ENCODE measurements at regions of chr3 and their contacts with region 1.

Region 1: DNA sequence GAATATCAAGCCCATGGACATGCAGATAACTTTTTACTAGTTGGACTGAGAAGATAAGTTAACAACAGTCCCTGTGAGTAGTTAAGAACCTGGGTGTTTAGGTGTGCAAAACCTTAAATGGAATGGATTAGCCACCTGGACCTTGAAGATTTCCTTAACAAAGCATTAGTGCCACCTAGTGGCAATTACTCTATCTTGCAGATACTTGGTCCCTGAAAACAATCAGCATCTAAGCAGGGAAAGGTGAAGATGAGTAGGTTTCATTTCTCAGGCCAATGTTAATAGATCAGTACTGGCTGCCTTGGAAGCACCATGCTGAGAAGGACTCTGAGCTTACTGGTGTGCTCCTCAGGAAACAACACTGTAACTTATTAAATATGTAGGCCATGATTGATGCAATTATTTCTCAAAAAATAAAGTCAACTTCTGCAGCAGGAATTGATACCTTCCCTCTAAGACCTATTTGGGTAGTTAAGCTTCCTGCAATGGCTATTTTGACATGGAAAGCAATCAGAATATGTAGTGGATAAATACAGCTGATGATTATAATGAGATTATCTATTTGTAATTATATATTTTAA is 329.4 kb downstream of the TBC1D5 start:
- H3K4me3 ChIP-seq: no peak overlapping the region
- H3K27ac ChIP-seq: no peak overlapping the region
- H3K4me1 ChIP-seq: no peaks in the 10 kb centered on the region
- CTCF ChIP-seq: peak; percentile 68

Region 2: DNA sequence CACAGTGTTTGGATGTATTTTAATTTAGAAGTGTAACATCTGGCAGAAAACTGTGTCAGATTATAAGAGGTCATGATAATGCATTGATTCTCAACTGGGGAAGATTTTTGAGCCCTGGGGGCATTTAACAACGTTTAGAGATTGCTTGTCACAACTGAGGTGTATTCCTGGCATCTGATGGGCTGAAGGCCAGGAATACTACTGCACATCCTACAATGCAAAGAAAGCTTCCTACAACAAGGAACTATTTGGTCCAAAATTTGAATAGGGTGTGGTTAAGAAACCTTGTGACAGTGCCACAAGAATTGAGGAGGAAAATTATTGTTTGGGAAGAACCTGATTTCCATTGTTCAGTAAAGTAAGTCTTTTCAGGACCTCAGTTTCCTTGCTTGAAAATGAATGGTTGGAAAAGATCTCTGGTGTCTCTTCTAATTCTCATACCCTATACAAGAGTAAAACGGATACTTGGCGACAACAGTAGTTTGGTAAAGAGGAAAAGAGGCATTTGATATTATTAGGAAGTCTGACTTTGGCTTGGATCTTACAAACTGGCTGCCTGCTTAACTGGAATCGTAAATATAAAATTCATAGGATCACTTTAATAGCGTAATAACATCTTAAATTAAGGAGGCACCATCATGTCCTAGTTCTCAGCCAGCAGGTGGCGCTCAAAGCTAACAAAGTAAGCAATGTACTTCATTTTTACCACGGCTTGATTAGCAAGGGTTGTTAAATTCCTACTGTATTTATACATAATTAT is 812.1 kb before region 1 on chr3:
- CTCF ChIA-PET with region 1: interaction called, 13 read pairs
- POLR2A ChIA-PET with region 1: no interaction called
- H3K4me3 ChIP-seq: no peak overlapping the region
- H3K27ac ChIP-seq: no peak overlapping the region
- H3K4me1 ChIP-seq: no peaks in the 10 kb centered on the region
- CTCF ChIP-seq: peak; percentile 40; the same call in 1 of the 2 replicates

Region 3: GRCh38 chr3:17258823-17259436 is 154.1 kb before region 1 on chr3:
- CTCF ChIA-PET with region 1: interaction called, 20 read pairs
- POLR2A ChIA-PET with region 1: no interaction called
- H3K4me3 ChIP-seq: no peak overlapping the region
- H3K27ac ChIP-seq: no peak overlapping the region
- H3K4me1 ChIP-seq: no peaks in the 10 kb centered on the region
- CTCF ChIP-seq: no peak

Region 4: DNA sequence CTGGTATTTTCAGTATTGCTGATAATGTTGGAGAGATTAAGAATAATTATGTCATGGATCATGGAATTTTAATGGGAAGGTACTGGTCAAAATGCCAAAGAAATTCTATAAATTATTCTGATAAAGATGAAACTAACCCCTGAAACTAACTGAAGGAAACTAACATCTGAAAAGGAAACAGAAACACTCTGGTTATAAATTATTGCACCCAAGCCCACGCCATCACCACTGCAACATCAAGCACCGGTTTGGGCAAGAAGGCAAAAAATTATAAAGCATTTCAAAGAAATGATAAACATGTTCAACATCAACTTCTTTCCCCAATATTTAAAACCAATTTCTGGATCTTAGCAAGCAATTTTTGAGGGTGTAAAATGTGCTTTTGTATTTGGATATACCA is 43.1 kb before region 1 on chr3:
- CTCF ChIA-PET with region 1: no interaction called
- POLR2A ChIA-PET with region 1: no interaction called
- H3K4me3 ChIP-seq: no peak overlapping the region
- H3K27ac ChIP-seq: no peak overlapping the region
- H3K4me1 ChIP-seq: no peaks in the 10 kb centered on the region
- CTCF ChIP-seq: no peak

Region 5: GRCh38 chr3:17398959-17399551 is 14.0 kb before region 1 on chr3:
- CTCF ChIA-PET with region 1: interaction called, 10 read pairs
- POLR2A ChIA-PET with region 1: no interaction called
- H3K4me3 ChIP-seq: no peak overlapping the region
- H3K27ac ChIP-seq: no peak overlapping the region
- H3K4me1 ChIP-seq: no peaks in the 10 kb centered on the region
- CTCF ChIP-seq: no peak

Region 6: DNA sequence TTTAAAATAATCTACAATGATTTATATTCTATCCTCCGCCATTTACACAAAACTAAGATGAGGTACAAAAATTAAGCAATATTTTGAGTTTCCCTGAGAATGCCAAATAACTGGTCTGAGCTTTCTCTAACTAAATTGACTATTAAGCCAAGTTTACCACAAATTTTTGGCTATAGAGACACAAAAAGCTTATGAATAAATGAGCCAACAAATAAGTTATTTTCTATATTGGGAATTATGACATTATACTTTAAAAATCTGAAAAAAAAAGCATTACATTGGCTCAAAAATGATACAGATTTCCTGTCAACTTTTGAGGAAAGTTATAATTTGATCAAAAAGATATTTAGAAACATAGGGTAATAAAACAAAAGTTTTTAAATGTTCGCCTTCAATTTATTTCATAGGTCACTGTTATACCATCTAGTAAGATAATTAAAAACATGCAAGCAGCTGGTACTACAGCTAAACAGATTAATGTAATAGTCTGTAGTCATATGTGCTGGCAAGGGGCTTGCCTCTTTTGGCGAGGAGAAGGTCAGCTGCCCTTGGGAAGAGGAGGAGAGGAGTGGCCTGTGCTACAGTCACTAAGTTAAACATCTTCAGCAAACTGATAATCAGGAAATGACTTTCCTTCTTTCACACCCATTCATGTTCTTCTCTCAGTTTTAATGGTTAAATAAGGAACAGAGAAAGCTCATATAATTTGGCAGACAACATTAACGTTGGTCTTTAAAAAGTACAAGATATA is 10.9 kb after region 1 on chr3:
- CTCF ChIA-PET with region 1: interaction called, 18 read pairs
- POLR2A ChIA-PET with region 1: no interaction called
- H3K4me3 ChIP-seq: no peak overlapping the region
- H3K27ac ChIP-seq: no peak overlapping the region
- H3K4me1 ChIP-seq: peaks cover 3% of the 10 kb centered on the region
- CTCF ChIP-seq: no peak

Region 7: DNA sequence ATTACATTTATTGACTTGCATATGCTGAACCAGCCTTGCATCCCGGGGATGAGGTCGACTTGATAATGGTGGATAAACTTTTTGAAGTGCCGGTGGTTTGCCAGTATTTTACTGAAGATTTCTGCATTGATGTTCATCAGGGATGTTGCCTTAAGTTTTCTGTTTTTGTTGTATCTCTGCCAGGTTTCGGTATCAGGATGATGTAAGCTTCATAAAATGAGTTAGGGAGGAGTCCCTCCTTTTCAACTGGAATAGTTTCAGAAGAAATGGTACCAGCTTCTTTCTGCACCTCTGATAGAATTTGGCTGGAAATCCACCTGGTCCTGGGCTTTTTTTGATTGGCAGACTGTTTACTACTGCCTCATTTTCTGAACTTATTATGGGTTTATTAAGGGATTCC is 78.6 kb after region 1 on chr3:
- CTCF ChIA-PET with region 1: no interaction called
- POLR2A ChIA-PET with region 1: no interaction called
- H3K4me3 ChIP-seq: no peak overlapping the region
- H3K27ac ChIP-seq: no peak overlapping the region
- H3K4me1 ChIP-seq: peaks cover 4% of the 10 kb centered on the region
- CTCF ChIP-seq: no peak

Region 8: GRCh38 chr3:17755836-17756235 is 342.8 kb after region 1 on chr3:
- CTCF ChIA-PET with region 1: no interaction called
- POLR2A ChIA-PET with region 1: no interaction called
- H3K4me3 ChIP-seq: no peak overlapping the region
- H3K27ac ChIP-seq: no peak overlapping the region
- H3K4me1 ChIP-seq: no peaks in the 10 kb centered on the region
- CTCF ChIP-seq: no peak

Region 9: GRCh38 chr3:18027161-18027939 is 614.3 kb after region 1 on chr3:
- CTCF ChIA-PET with region 1: no interaction called
- POLR2A ChIA-PET with region 1: no interaction called
- H3K4me3 ChIP-seq: no peak overlapping the region
- H3K27ac ChIP-seq: no peak overlapping the region
- H3K4me1 ChIP-seq: no peaks in the 10 kb centered on the region
- CTCF ChIP-seq: no peak

Measured in HEK293 (cell line).